ENCODE measurements at regions of chr20 and their contacts with region 1.

Region 1: DNA sequence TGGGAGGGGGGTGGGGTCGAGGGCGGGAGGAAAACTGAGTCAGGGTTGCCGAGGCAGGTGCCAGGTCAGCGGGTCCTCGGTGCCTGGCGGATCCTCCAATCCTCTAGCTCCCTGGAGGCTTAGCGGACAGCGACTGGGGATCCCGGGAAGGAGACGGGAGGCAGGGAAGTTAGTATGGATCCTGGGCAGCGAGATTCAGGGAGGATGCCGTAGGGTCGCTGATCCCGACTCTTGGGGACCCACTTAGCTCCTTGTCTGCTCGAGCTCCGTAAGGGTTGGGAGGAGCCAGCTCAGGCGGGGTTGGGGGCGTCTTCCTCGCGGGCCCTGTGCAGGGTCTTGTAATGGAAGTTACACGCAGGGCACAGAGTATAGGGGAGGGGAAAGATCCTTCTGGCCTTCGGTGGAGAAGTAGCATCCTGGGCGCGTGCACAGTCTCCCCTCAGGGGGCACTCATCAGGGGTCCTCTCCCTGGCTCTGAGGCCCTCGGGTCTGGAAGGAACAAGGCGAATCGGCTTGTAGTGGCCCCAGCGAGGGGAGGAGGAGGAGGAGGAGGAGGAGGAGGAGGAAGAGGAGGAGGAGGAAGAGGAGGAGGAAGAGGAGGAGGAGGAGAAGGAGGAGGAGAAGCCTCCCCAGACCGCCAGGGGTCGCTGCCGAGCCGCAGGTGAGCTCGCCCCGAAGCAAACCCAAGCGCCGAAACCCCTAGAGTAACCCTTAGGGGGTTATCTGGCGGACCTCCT is 6.4 kb upstream of the SLC12A5 start:
- DNase-seq: peak; percentile 66
- ATAC-seq: peak; percentile 58 to 60

Region 2: GRCh38 chr20:45963059-45964005 is 59.2 kb before region 1 on chr20:
- intact Hi-C with region 1: no loop called
- DNase-seq: no peak
- ATAC-seq: no peak

Region 3: DNA sequence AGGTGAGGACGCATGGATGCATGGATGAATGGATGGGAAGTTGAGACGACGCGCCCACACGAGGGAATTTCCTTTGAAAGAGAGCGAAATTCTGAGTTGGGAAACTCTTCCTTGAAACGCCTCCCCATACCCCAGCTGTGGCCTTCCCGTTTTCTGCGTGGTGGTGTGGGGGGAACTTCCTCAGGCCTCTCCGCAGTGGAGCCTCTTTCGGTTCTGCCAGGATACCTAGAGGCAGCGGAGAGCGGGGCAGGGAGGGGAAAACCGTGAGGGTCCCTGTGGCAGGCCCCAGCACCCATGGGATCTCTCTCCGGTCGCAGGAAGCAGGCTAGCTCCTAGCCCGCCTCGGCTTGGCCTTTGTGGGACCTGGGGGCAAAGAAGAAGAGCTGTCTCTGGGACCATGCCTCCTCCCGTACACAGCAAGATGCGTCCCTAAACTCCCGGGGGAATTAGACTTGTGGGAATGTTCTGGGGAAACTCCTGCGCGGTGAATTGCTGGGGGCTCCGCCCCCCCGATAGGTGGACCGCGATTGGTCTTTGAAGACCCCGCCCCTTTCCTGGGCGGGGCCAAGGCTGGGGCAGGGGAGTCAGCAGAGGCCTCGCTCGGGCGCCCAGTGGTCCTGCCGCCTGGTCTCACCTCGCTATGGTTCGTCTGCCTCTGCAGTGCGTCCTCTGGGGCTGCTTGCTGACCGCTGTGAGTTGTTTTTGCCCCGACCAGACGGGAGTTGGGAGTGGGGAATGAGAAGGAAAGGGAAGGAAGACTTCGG is 95.3 kb after region 1 on chr20 and contains the start of gene CD40:
- intact Hi-C with region 1: loop called in 1 of 2 experiments (anchors 10 kb)
- DNase-seq: peak; percentile 94
- ATAC-seq: peak; percentile 98
- total RNA-seq, gene CD40: 11.1 to 13.7 TPM

Region 4: GRCh38 chr20:46174469-46175128 is 152.0 kb after region 1 on chr20:
- intact Hi-C with region 1: loop called in 1 of 2 experiments (anchors 5 kb)
- DNase-seq: peak; percentile 82
- ATAC-seq: peak; percentile 82

Measured in left cardiac atrium (tissue), 4 donors.